ENCODE measurements at regions of chr13 and their contacts with region 1.

Region 1: GRCh38 chr13:46119883-46120614 is 15.2 kb upstream of the CPB2 start:
- DNase-seq: no peak
- CTCF ChIP-seq: no peak

Region 2: DNA sequence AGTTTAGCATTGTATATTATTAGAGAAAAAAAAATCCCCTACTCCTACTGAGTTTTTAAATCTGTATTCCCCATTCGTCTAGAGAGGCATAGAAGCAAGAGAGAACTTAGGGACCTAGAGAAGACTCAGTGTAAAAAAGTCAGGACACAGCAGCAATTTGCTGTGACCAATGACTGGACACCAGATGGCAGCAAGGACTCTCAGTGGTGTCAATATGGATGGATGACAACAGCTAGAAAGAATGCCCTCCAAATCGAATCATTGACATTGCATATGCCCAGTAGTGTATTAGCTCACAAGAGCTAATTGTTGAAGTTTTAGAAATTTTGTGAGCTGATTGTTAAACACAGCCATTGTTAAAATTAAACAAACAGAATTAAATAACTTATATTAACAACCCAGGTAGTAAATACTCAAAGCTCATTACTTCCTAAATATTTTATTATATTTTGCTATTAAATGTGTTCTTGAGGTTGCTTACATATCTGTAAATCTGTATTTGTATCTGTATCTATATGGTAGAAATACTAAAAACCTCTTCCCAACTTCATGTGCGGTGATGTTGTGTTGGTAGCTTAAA is 312.4 kb before region 1 on chr13:
- in situ Hi-C with region 1: loop called (anchors 25 kb)
- DNase-seq: peak; percentile 62
- CTCF ChIP-seq: peak; percentile 77

Region 3: GRCh38 chr13:46648166-46648635 is 528.2 kb after region 1 on chr13:
- in situ Hi-C with region 1: no loop called
- DNase-seq: no peak
- CTCF ChIP-seq: no peak